Endothelial cell of umbilical vein (primary cell): ENCODE measurements at regions of chr12 and their contacts with region 1.

Region 1: DNA sequence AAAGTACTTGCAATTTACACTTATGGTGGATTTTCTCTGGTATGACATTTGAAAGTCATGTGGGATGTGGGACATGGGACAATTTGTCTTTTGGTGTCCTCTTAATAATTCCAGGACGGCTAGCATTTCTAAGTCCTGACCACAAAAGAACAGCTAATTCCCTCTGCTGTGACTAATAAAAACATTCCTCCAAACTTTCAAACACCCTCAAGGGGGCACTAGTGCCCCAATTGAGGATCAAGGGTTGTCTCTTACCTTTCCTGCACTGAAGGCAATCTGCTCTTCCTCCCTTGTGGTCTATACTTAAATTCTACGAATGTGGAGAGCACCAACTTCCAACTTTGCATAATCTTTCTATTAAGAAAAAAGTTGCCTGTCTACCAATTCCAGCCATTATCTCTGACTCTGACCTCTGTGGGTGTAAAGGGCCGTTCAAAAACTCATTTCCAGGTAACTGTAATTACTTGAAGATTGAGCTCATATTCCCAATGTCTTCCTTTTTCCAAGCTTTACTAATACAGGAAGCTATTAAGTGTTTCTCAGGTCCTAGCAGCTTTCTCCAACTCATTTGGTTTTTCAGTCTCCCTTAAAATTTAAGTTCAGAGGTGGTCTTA is 210.2 kb downstream of the PTPRO start:
- DNase-seq: peak; percentile 41
- H3K4me3 ChIP-seq: no peak overlapping the region
- H3K27ac ChIP-seq: no peak overlapping the region
- H3K4me1 ChIP-seq: no peaks in the 10 kb centered on the region
- H3K27me3 ChIP-seq: peaks cover 0 to 3% of the 10 kb centered on the region in 2 experiments
- CTCF ChIP-seq: peak; percentile 25 to 45
- POLR2A ChIP-seq: no peak

Region 2: GRCh38 chr12:15227004-15227679 is 305.3 kb before region 1 on chr12:
- CTCF ChIA-PET with region 1: interaction called, 30 read pairs
- POLR2A ChIA-PET with region 1: no interaction called
- dilution Hi-C with region 1: no loop called
- intact Hi-C with region 1: no loop called
- DNase-seq: peak; percentile 55
- H3K4me3 ChIP-seq: no peak overlapping the region
- H3K27ac ChIP-seq: no peak overlapping the region
- H3K4me1 ChIP-seq: no peaks in the 10 kb centered on the region
- H3K27me3 ChIP-seq: peaks cover 7 to 23% of the 10 kb centered on the region in 2 experiments
- CTCF ChIP-seq: peak; percentile 56 to 67
- POLR2A ChIP-seq: no peak

Region 3: DNA sequence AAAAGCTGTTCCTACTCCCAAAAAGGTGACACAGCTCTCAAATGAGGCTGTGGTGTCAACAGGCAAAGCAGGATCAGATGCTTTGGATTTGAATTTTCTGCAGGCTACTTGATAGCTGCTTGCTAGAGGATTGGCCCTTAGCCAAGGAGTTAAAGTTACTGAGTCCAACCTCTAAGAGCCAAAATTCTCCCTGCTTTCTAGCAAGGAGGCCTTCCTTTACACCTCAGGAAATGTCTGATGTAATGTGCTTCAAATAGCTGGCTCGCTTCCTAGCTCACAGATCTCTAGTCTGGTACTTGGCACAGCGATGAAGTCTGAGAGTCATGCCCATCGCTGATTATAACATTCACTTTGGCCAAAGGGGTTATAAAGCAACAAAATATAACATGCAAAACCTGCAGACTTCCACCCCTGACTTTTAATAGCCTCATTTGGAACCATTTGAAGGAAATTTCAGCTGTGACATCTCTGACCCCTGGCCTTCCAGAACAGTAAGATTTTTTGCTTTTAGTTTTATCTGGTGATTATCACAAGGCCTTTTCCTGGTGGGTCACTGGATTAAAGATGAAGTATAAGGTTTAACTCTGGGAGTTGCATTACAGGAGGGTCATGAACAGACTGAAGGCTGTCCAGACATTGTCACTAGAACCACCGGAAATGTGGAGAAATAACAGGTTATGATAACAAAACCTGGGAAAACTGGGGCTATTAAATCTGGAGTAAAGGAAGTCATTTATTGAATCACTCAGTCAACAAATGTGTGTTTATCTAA is 67.0 kb after region 1 on chr12:
- CTCF ChIA-PET with region 1: no interaction called
- POLR2A ChIA-PET with region 1: no interaction called
- dilution Hi-C with region 1: no loop called
- intact Hi-C with region 1: no loop called
- DNase-seq: peak; percentile 87
- H3K4me3 ChIP-seq: no peak overlapping the region
- H3K27ac ChIP-seq: peak overlapping the region; percentile 60
- H3K4me1 ChIP-seq: peaks cover 28% of the 10 kb centered on the region
- H3K27me3 ChIP-seq: peaks cover 0 to 2% of the 10 kb centered on the region in 2 experiments
- CTCF ChIP-seq: no peak
- POLR2A ChIP-seq: no peak